SK-N-SH (cell line): ENCODE measurements at regions of chr4 and their contacts with region 1.

Region 1: DNA sequence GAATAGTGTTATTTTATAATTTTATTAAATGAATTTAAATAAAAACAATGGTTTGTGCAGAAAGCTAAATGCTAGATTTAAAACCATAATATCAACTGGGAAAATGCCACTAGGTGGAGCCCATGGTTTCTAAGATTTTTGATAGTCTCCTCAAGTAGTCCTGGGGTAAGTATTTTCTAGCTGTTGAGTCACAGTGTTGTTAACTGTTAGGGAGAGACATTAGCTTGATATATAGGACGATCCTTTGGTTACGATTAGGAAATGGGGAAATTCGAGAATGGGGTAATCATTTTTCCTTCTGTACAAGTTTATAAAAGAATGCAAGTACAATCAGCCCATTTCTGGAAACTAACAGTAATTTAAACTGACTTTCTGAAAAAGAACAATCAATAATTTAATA is 378.4 kb downstream of the ANKRD50 start:
- DNase-seq: peak; percentile 42
- H3K4me3 ChIP-seq: peak overlapping the region in 1 of 2 experiments; percentile 26; a peak in 1 of 4 replicates
- H3K27ac ChIP-seq: peak overlapping the region in 1 of 2 experiments; percentile 26; a peak in 1 of 4 replicates
- H3K4me1 ChIP-seq: peaks cover 5% of the 10 kb centered on the region in 2 experiments; a peak in 3 of 4 replicates
- H3K27me3 ChIP-seq: no peaks in the 10 kb centered on the region
- CTCF ChIP-seq: peak; percentile 68
- EP300 ChIP-seq: no peak
- RAD21 ChIP-seq: peak; percentile 86

Region 2: GRCh38 chr4:124322234-124323065 is 11.7 kb before region 1 on chr4:
- CTCF ChIA-PET with region 1: interaction called, 23 read pairs
- POLR2A ChIA-PET with region 1: no interaction called
- DNase-seq: peak; percentile 25
- H3K4me3 ChIP-seq: no peak overlapping the region
- H3K27ac ChIP-seq: no peak overlapping the region; a peak in 1 of 4 replicates
- H3K4me1 ChIP-seq: peaks cover 0 to 4% of the 10 kb centered on the region in 2 experiments; a peak in 2 of 4 replicates
- H3K27me3 ChIP-seq: no peaks in the 10 kb centered on the region
- CTCF ChIP-seq: peak; percentile 70
- EP300 ChIP-seq: no peak
- RAD21 ChIP-seq: peak; percentile 81

Region 3: GRCh38 chr4:124712372-124713184 is 378.5 kb after region 1 on chr4 and contains the start of gene ANKRD50:
- CTCF ChIA-PET with region 1: interaction called, 15 read pairs
- POLR2A ChIA-PET with region 1: interaction called, 6 read pairs
- DNase-seq: peak; percentile 93
- H3K4me3 ChIP-seq: peak within 1 kb of the TSS; percentile 86 to 88
- H3K27ac ChIP-seq: peak within 1 kb of the TSS; percentile 98 to 100
- H3K4me1 ChIP-seq: peaks cover 15 to 17% of the 10 kb centered on the region in 2 experiments; a peak in 3 of 4 replicates
- H3K27me3 ChIP-seq: no peaks in the 10 kb centered on the region
- CTCF ChIP-seq: no peak
- EP300 ChIP-seq: 0 out of 4 replicates have a peak, but pooled peaks have one; percentile 6 to 41
- RAD21 ChIP-seq: no peak; the same call in 1 of the 2 replicates
- polyA plus RNA-seq, gene ANKRD50: 13.5 and 18.3 TPM in 2 replicates

Region 4: DNA sequence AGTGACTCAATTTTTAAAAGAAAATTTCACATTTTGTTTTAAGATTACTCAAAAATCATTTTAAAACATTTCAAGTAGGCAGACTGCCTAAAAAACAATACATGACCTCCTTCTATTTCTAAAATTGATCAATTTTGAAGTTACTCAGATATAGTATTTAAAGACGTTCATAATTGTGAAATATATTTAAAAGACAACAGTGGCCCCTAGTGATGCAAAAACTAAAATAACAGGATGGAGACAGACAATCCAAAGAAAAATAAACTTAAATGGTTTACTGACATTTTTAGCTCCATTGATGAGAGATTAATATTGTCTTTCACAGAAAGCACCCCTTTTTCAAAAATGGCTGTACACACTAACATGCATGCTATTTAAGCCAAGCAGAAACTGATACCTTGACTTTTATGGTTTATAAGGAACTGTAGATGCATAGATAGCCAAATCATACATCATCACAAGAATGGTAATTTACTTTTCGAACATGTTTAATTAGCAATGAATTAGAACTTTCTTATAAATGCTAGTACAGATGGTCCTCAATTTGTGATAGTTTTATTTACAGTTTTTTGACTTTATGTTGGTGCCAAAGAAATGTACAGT is 910.8 kb after region 1 on chr4:
- CTCF ChIA-PET with region 1: interaction called, 41 read pairs
- POLR2A ChIA-PET with region 1: no interaction called
- DNase-seq: no peak
- H3K4me3 ChIP-seq: no peak overlapping the region
- H3K27ac ChIP-seq: peak overlapping the region in 1 of 2 experiments; percentile 12; a peak in 1 of 4 replicates
- H3K4me1 ChIP-seq: no peaks in the 10 kb centered on the region; a peak in 1 of 4 replicates
- H3K27me3 ChIP-seq: no peaks in the 10 kb centered on the region
- CTCF ChIP-seq: peak; percentile 70
- EP300 ChIP-seq: no peak
- RAD21 ChIP-seq: peak; percentile 71

Region 5: DNA sequence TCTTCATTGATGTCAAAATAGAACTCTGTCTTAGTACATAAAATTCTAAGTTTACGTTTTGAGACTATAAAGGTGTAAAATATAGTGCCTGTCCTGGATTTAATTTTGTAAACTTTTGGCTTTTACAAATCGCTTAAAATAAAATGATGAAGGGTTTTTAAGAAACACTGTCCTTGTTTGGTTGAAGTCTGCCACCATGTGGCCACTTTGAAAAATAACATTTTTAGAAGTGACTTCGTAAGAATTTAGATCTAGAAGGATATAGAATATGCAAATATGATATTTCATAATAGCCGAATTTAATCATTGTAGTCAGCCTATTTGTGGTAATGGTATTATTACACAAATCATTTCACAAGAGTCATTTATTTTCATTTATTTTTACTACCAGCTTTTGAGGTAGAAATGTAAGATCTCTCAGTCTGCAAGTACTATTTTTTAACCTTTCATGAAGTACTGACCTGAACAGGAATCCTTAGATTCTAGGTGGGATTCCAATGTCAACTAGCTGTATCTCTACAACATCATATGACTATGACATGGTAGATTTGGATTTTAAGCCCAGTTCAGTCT is 949.7 kb after region 1 on chr4:
- CTCF ChIA-PET with region 1: interaction called, 45 read pairs
- POLR2A ChIA-PET with region 1: no interaction called
- DNase-seq: peak; percentile 37
- H3K4me3 ChIP-seq: no peak overlapping the region
- H3K27ac ChIP-seq: no peak overlapping the region
- H3K4me1 ChIP-seq: no peaks in the 10 kb centered on the region
- H3K27me3 ChIP-seq: no peaks in the 10 kb centered on the region
- CTCF ChIP-seq: peak; percentile 75
- EP300 ChIP-seq: no peak
- RAD21 ChIP-seq: peak; percentile 83

Region 6: DNA sequence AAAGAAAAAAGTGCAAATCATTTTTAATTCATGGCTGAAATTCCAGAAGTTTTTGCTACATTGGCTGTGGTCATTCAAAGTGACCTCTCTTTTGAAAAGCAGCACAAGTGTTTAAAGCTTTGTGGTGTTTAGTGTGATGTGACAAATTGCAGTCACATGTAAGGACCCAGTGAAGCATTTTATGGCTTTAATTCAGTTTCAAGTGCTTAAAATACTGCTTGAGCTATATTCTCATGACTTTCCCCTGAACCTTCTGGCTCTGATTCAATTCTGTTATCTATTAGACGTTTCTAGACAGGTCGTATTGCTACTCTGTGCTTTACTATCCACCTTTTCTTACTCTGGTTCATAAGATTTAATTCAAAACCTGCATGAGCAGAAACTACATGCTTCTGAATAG is 1086.4 kb after region 1 on chr4:
- CTCF ChIA-PET with region 1: no interaction called
- POLR2A ChIA-PET with region 1: no interaction called
- DNase-seq: no peak
- H3K4me3 ChIP-seq: no peak overlapping the region
- H3K27ac ChIP-seq: no peak overlapping the region
- H3K4me1 ChIP-seq: no peaks in the 10 kb centered on the region; a peak in 1 of 4 replicates
- H3K27me3 ChIP-seq: no peaks in the 10 kb centered on the region
- CTCF ChIP-seq: no peak
- EP300 ChIP-seq: no peak
- RAD21 ChIP-seq: no peak